ENCODE measurements at regions of chr1 and their contacts with region 1.

Region 1: DNA sequence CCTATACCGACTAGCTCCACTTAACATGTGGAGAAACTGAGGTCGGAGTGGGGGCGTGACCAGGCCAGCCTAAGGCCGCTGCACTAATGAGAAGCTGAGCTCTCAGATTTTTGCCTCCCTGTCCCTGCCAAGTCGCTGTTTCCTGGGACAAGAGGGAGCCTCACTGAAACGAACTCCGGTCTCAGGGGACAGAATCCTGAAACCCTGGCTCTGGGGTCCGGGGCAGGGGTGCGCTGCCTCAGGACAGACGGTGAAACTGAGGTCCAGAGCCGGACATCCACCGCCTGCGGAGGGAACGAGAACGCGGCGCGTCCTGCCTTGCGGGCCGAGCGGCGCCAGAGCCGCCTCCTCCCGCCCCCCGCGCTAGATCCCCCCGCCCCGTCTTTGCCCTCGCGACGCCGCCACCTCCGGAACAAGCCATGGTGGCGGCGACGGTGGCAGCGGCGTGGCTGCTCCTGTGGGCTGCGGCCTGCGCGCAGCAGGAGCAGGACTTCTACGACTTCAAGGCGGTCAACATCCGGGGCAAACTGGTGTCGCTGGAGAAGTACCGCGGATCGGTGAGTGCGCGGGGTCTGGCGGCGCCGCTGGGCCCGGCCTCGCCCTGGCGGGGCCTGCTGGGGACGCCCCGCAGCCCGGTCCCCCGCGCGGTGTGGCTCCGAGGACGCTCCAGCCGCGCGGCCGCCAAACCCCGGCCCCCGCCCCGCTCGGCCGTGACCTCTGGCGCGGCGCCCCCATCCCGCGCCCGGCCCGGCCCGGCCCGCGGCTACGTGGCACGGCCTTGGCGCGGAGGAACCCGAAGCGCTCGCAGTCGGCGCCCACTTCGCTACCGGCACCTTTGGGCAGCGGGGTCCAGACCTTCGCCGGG is at the start of gene GPX7:
- DNase-seq: peak; percentile 79
- ATAC-seq: peak; percentile 81
- total RNA-seq, gene GPX7: 4.7 TPM

Region 2: DNA sequence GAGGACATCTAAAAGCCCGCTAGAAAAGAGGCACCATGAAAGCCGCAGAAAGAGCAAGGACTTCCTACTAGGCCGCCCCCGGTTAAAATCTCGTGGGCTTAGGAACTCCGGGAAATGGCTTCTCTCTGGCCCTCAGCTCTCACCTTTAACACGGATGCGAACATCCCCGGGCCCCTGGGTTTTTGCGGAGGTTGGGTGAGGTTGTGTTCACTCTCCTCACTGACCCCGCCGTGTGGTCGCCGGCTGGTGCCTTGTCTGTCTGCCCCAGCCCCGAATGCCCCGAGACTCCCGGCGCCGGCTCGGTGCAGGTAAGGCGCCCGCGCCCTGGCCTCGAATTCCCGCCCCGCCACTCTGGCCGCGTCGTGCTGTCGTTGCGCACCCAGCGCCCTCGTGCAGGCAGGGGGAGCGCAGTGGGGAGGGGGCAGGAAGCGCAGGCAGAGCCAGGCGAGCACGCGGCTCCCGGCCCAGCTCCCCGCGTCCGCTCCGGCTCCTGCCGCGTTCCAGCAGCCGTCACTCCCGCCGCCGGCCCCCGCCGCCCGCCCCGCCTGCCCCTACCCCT is 30.6 kb after region 1 on chr1 and contains the start of gene SHISAL2A:
- intact Hi-C with region 1: no loop called
- DNase-seq: peak; percentile 82
- ATAC-seq: peak; percentile 53
- total RNA-seq, gene SHISAL2A: not detected

Region 3: GRCh38 chr1:52651904-52652303 is 49.7 kb after region 1 on chr1:
- intact Hi-C with region 1: no loop called
- DNase-seq: no peak
- ATAC-seq: no peak

Region 4: DNA sequence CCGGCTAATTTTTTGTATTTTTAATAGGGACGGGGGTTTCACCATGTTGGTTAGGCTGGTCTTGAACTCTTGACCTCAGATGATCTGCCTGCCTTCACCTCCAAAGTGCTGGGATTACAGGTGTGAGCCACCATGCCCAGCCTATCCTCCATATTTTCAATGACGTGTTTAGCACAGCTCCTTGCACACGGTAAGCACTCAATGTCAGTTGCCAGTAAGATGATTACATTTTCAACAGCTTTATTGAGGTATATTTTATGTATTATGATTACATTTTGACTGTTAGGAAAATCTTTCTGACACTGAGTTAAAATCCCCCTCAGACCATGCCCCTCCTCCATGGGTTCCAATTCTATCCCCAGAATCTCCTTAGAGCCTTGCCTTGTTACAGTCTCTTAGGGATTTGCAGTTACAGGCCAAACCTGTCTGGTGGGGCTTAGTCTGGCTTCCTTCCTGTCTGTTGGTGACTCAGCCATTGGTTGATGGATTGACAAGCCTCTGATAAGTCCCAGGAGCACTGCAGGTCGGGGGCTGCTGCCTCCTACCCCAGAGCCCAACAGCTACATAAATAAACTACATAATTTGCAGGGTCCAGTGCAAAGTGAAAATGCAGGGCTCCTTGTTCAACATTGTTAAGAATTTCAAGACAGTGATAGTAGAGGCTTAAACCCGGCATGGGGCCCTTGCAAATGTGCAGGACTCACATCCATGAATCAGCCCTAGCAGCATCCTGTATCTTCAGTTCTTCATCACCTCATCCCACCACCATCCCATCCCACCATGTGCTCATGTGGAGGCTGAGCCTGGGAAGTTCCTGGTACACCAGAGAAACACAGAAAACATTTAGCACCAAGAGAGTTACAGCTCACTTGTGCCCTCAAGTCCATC is 72.5 kb after region 1 on chr1:
- intact Hi-C with region 1: loop called (anchors 10 kb)
- DNase-seq: no peak
- ATAC-seq: no peak